Adrenal gland (tissue), 19 donors: ENCODE measurements at regions of chr2 and their contacts with region 1.

Region 1: DNA sequence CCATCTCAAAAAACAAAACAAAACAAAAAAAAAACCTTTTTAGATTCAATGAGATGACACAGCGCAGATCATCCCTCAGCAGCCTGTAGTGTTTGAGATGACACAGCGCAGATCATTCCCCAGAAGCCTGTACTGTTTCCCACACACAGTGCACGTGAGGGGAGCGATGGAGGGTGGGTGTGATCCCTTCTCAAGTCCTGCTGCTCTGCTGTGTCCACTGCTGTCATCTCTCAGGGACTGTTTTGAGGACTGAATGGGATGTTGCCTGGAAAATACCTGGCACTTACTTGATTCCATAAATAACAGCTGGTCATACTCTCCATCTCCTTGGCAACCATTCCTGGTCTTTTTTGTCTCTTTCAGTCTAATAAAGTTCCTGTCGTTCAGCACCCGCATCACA is 25.7 kb downstream of the TGOLN2 start:
- DNase-seq: no peak
- H3K4me3 ChIP-seq: no peak overlapping the region
- H3K27ac ChIP-seq: no peak overlapping the region
- H3K4me1 ChIP-seq: no peaks in the 10 kb centered on the region
- H3K27me3 ChIP-seq: no peaks in the 10 kb centered on the region
- CTCF ChIP-seq: no peak
- POLR2A ChIP-seq: no peak

Region 2: GRCh38 chr2:85066874-85067351 is 235.2 kb before region 1 on chr2:
- intact Hi-C with region 1: loop called (anchors 5 kb)
- DNase-seq: peak; percentile 57 to 92 (median 81)
- H3K4me3 ChIP-seq: peak overlapping the region in 1 of 4 donors; percentile 41
- H3K27ac ChIP-seq: no peak overlapping the region
- H3K4me1 ChIP-seq: peaks cover 0 to 3% of the 10 kb centered on the region in 2 donors
- H3K27me3 ChIP-seq: no peaks in the 10 kb centered on the region
- CTCF ChIP-seq: peak; percentile 62 to 84 (median 70)
- POLR2A ChIP-seq: no peak